ENCODE measurements at regions of chr12 and their contacts with region 1.

Region 1: GRCh38 chr12:67222302-67222701 is 46.9 kb upstream of the CAND1 start:
- DNase-seq: no peak
- H3K4me3 ChIP-seq: no peak overlapping the region
- H3K27ac ChIP-seq: no peak overlapping the region
- H3K4me1 ChIP-seq: peaks cover 0 to 25% (median 5%) of the 10 kb centered on the region in 4 donors
- H3K27me3 ChIP-seq: no peaks in the 10 kb centered on the region
- CTCF ChIP-seq: peak in 1 of 3 experiments; percentile 51
- EP300 ChIP-seq: no peak
- POLR2A ChIP-seq: no peak

Region 2: DNA sequence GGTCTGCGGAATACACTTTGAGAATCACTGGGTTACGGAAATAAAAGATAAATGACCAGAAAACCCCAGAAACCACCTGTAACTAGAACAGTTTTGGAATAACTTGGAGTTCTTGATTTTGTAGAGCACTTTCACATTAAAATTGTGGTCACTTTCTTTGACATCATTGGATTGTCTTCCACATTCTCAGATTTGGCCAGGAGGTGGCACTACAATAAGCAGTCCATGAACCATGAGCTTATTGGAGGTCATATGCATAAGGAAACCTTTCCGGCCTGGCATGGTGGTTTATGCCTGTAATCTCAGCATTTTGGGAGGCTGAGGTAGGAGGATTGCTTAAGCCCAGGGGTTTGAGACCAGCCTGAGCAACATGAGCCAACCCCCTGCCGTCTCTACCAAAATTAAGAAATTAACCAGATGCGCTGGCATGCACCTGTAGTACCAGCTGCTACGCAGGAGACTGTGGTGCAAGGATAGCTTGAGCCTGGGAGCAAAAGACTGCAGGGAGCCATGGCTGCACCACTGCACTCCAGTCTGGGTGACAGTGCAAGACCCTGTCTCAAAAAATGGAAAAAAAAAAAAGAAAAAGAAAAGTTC is 60.9 kb before region 1 on chr12:
- intact Hi-C with region 1: loop called (anchors 5 kb)
- DNase-seq: no peak
- H3K4me3 ChIP-seq: no peak overlapping the region
- H3K27ac ChIP-seq: no peak overlapping the region
- H3K4me1 ChIP-seq: no peaks in the 10 kb centered on the region
- H3K27me3 ChIP-seq: no peaks in the 10 kb centered on the region
- CTCF ChIP-seq: peak; percentile 52 to 60 (median 52)
- EP300 ChIP-seq: no peak
- POLR2A ChIP-seq: no peak

Measured in esophagus muscularis mucosa (tissue), 4 donors.